AG04449 (cell line): ENCODE measurements at regions of chr6 and their contacts with region 1.

Region 1: GRCh38 chr6:52009466-52010140 is 77.8 kb downstream of the PKHD1 start:
- DNase-seq: no peak
- H3K4me3 ChIP-seq: no peak overlapping the region
- CTCF ChIP-seq: no peak

Region 2: DNA sequence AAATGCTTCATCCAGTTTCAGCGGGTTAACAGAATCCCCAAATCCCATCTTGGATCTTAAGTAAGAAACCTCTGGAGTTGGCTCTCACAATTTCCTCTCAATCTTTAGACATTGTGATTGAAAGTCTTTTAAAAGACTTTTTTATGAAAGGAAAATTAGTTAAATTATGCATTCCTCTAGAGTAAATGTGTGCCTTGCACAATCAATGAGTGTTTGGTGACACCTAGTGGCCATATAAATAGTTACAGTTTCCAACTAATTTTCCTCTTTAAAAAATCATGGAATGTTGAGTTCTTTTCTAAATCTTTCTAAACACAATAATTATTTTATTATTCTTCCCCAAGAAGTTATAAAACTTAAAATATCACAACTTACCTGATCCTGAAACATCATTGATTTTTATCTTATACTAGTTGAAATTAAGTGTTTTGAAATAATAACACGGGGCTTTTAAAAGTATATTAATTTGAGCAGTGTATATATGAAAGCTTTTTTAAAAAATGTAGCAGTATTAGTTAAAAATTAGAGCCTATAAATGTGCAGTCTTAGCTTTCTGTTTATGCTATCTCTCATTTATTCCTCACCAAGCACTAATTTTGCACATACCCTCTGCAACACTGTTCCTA is 11.5 kb after region 1 on chr6:
- CTCF ChIA-PET with region 1: interaction called, 15 read pairs
- POLR2A ChIA-PET with region 1: no interaction called
- DNase-seq: no peak
- H3K4me3 ChIP-seq: no peak overlapping the region
- CTCF ChIP-seq: peak; percentile 29